MCF 10A (cell line): ENCODE measurements at regions of chr20 and their contacts with region 1.

Region 1: DNA sequence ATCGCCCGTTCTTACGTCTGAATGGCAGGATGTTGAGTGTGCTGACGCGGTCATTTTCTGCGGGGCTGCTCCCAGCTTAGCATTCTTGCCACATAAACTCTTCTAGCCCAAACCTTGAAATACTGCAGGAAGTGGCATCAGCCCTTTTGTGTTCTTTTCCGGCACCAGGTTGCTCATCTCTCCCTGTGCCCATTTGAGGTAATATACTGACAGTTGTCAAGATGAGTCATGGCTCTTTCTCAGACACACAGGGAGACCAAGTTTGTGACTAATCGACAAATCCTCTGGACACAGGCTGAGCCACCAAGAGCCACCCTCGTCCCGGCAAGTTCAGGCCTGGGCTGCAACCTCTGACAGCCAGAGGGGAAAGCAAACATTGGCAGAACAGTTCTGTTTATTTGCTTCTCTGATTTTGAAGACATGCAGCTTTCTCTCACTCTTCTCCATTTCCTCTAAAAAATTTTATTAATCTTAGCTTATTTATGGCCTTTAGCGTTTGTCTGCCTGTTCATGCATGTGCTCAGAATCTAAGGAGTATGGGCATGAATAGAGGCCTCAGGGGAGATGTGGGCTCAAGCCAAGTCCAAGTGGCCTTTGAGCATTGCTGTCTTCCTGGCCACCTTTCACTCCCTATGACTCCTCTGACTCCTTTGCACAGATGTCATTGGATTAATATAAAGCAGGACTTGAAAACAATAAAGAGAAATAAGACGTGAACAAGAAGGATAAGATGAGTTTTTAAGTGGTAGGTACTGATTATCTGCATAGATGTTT is 328.2 kb upstream of the JAG1 start:
- DNase-seq: peak; percentile 99
- H3K4me3 Mint-ChIP-seq: peak overlapping the region; percentile 33
- H3K27ac Mint-ChIP-seq: peak overlapping the region; percentile 91
- H3K4me1 Mint-ChIP-seq: peaks cover 28% of the 10 kb centered on the region
- H3K27me3 Mint-ChIP-seq: no peaks in the 10 kb centered on the region
- CTCF ChIP-seq: no peak

Region 2: GRCh38 chr20:10793766-10794165 is 208.2 kb before region 1 on chr20:
- CTCF ChIA-PET with region 1: no interaction called
- POLR2A ChIA-PET with region 1: no interaction called
- intact Hi-C with region 1: no loop called
- DNase-seq: no peak
- H3K4me3 Mint-ChIP-seq: no peak overlapping the region
- H3K27ac Mint-ChIP-seq: no peak overlapping the region
- H3K4me1 Mint-ChIP-seq: peaks cover 12% of the 10 kb centered on the region
- H3K27me3 Mint-ChIP-seq: no peaks in the 10 kb centered on the region
- CTCF ChIP-seq: no peak

Region 3: DNA sequence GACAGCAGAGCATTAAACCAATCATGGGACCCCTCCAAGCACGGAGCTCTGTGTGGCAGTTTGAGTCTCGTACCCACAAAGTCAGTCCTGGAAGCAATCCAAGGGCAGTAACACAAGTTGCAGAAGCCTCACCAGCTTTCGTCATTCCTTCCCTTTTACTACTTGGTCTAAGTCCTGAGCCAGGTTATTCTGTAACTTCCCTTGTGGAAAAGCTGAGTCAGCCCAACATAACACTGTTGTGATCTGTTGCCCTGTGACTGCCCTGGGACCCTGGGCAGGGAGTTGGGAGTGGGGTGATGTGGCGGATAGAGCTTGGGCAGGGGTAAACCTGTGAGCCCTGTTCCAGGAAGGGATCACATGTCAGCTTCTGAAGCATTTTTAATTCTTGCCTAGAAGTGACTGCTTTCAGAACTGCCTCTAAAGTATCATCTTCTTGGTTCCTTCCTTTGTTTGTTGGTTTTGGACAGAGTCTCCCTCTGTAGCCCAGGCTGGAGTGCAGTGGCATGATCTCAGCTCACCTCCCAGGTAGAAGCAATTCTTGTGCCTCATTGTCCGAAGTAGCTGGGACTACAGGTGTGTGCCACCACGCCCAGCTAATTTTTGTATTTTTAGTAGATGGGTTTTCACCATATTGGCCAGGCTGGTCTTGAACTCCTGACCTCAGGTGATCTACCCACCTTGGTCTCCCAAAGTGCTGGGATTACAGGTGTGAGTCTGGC is 144.4 kb before region 1 on chr20:
- CTCF ChIA-PET with region 1: interaction called, 3 read pairs
- POLR2A ChIA-PET with region 1: interaction called, 10 read pairs
- intact Hi-C with region 1: loop called (anchors 5 kb)
- DNase-seq: peak; percentile 93
- H3K4me3 Mint-ChIP-seq: no peak overlapping the region
- H3K27ac Mint-ChIP-seq: peak overlapping the region; percentile 46
- H3K4me1 Mint-ChIP-seq: peaks cover 49% of the 10 kb centered on the region
- H3K27me3 Mint-ChIP-seq: no peaks in the 10 kb centered on the region
- CTCF ChIP-seq: no peak

Region 4: GRCh38 chr20:10876558-10876957 is 125.4 kb before region 1 on chr20:
- CTCF ChIA-PET with region 1: no interaction called
- POLR2A ChIA-PET with region 1: no interaction called
- intact Hi-C with region 1: no loop called
- DNase-seq: peak; percentile 62
- H3K4me3 Mint-ChIP-seq: no peak overlapping the region
- H3K27ac Mint-ChIP-seq: no peak overlapping the region
- H3K4me1 Mint-ChIP-seq: no peaks in the 10 kb centered on the region
- H3K27me3 Mint-ChIP-seq: no peaks in the 10 kb centered on the region
- CTCF ChIP-seq: no peak

Region 5: GRCh38 chr20:10922941-10923340 is 79.0 kb before region 1 on chr20:
- CTCF ChIA-PET with region 1: interaction called, 3 read pairs
- POLR2A ChIA-PET with region 1: interaction called, 10 read pairs
- intact Hi-C with region 1: loop called (anchors 5 kb)
- DNase-seq: peak; percentile 85
- H3K4me3 Mint-ChIP-seq: peak overlapping the region; percentile 24
- H3K27ac Mint-ChIP-seq: peak overlapping the region; percentile 50
- H3K4me1 Mint-ChIP-seq: peaks cover 46% of the 10 kb centered on the region
- H3K27me3 Mint-ChIP-seq: no peaks in the 10 kb centered on the region
- CTCF ChIP-seq: no peak

Region 6: DNA sequence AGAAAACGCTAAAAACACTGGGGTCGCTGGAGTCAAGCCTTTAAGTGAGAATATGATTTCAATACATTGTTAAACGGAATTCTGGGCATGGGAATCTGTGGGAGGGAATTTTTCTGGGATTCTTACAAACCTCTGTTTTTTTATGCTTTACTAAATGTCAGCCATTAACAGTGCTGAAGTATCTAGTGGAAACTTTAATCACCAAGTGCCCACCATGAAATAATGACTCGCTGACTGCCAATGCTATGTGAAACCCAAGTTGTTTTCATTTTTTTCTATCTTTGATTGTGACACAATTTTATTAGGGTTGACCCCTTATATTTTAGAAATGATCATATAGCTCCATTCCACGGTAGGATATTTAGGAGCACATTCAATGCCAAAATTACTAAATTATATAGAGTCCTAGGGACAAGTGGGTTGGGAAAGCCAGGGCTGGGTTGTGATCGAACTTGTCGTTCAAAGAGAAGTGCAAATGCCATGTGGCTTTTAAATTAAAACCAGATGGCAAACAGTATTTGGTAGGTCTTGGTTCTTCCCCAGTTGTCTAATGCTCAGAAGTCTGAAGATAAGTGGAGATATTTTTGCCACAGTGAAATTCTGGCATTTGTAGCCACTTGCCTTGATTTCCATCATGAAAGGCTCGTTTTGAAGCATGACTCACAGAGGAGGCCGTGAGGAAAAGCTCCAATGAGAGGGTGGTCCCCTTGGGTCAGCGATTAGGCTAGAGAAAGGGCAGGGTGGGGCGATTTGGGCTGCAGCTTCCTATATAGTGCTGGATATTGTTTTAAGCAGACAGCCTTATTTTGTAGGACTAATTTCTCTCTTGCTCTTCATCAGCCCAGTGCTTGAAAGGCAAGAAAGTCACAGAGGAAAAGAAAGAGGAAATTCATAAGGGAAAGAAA is 73.8 kb before region 1 on chr20:
- CTCF ChIA-PET with region 1: no interaction called
- POLR2A ChIA-PET with region 1: interaction called, 10 read pairs
- intact Hi-C with region 1: loop called (anchors 5 kb)
- DNase-seq: no peak
- H3K4me3 Mint-ChIP-seq: no peak overlapping the region
- H3K27ac Mint-ChIP-seq: no peak overlapping the region
- H3K4me1 Mint-ChIP-seq: peaks cover 17% of the 10 kb centered on the region
- H3K27me3 Mint-ChIP-seq: no peaks in the 10 kb centered on the region
- CTCF ChIP-seq: no peak

Region 7: GRCh38 chr20:10954137-10954840 is 47.7 kb before region 1 on chr20:
- CTCF ChIA-PET with region 1: interaction called, 11 read pairs
- POLR2A ChIA-PET with region 1: interaction called, 24 read pairs
- intact Hi-C with region 1: no loop called
- DNase-seq: peak; percentile 92
- H3K4me3 Mint-ChIP-seq: no peak overlapping the region
- H3K27ac Mint-ChIP-seq: peak overlapping the region; percentile 91
- H3K4me1 Mint-ChIP-seq: peaks cover 19% of the 10 kb centered on the region
- H3K27me3 Mint-ChIP-seq: no peaks in the 10 kb centered on the region
- CTCF ChIP-seq: no peak

Region 8: GRCh38 chr20:10972219-10972860 is 29.6 kb before region 1 on chr20:
- CTCF ChIA-PET with region 1: no interaction called
- POLR2A ChIA-PET with region 1: no interaction called
- intact Hi-C with region 1: no loop called
- DNase-seq: no peak
- H3K4me3 Mint-ChIP-seq: no peak overlapping the region
- H3K27ac Mint-ChIP-seq: no peak overlapping the region
- H3K4me1 Mint-ChIP-seq: no peaks in the 10 kb centered on the region
- H3K27me3 Mint-ChIP-seq: no peaks in the 10 kb centered on the region
- CTCF ChIP-seq: no peak

Region 9: DNA sequence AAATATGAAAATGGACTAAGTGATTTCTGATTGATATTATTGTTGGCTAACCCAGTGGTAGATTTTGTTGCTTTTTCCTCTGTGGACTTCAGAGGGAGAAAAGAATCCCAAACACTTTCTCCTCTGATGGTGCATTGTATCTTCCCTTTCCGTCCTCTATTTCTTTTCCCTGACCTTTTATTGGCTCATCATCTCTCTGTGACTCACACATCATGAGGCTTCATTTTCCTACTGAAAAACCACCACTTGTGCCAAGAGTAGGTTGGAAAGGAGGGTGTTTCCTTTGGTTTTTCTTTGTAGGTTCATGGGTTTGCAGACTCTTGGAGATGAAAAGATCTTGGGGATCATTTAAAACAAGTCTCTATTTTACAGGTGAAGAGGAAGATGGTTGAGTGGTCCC is 16.4 kb before region 1 on chr20:
- CTCF ChIA-PET with region 1: interaction called, 6 read pairs
- POLR2A ChIA-PET with region 1: interaction called, 24 read pairs
- intact Hi-C with region 1: no loop called
- DNase-seq: peak; percentile 62
- H3K4me3 Mint-ChIP-seq: no peak overlapping the region
- H3K27ac Mint-ChIP-seq: peak overlapping the region; percentile 18
- H3K4me1 Mint-ChIP-seq: peaks cover 25% of the 10 kb centered on the region
- H3K27me3 Mint-ChIP-seq: no peaks in the 10 kb centered on the region
- CTCF ChIP-seq: no peak

Region 10: GRCh38 chr20:11178946-11179654 is 177.1 kb after region 1 on chr20:
- CTCF ChIA-PET with region 1: interaction called, 4 read pairs
- POLR2A ChIA-PET with region 1: no interaction called
- intact Hi-C with region 1: loop called (anchors 10 kb)
- DNase-seq: peak; percentile 77
- H3K4me3 Mint-ChIP-seq: no peak overlapping the region
- H3K27ac Mint-ChIP-seq: no peak overlapping the region
- H3K4me1 Mint-ChIP-seq: peaks cover 10% of the 10 kb centered on the region
- H3K27me3 Mint-ChIP-seq: no peaks in the 10 kb centered on the region
- CTCF ChIP-seq: peak; percentile 20

Region 11: DNA sequence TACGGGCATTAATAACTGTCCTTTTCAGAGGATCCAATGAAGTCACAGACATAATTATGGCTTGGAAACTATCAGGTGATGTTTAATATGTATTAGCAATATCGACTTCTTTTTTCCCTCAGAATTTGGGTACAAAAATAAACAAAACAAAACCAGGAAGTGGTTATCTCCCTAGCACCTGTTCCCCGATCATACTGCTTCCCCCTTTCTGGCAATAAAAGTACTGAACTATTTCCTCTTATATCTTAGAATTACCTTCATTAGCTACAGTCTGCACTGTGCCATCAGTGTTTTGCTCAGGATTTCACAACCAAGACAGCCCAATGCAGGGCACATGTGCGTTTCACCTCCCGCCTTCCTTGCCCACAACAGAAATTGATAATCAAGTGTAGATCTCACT is 698.9 kb after region 1 on chr20:
- CTCF ChIA-PET with region 1: no interaction called
- POLR2A ChIA-PET with region 1: no interaction called
- intact Hi-C with region 1: no loop called
- DNase-seq: no peak
- H3K4me3 Mint-ChIP-seq: no peak overlapping the region
- H3K27ac Mint-ChIP-seq: no peak overlapping the region
- H3K4me1 Mint-ChIP-seq: no peaks in the 10 kb centered on the region
- H3K27me3 Mint-ChIP-seq: no peaks in the 10 kb centered on the region
- CTCF ChIP-seq: no peak